Activated B cell treated with CpG ODN at 0.5 μM for 24 hours (primary cell): ENCODE measurements at regions of chr1 and their contacts with region 1.

Region 1: GRCh38 chr1:12166834-12167492 is at the start of gene TNFRSF1B:
- DNase-seq: peak; percentile 70
- ATAC-seq: peak; percentile 72
- H3K4me3 Mint-ChIP-seq: peak within 1 kb of the TSS; percentile 97
- H3K27ac Mint-ChIP-seq: peak within 1 kb of the TSS; percentile 92
- H3K4me1 Mint-ChIP-seq: peaks cover 71% of the 10 kb centered on the region
- H3K27me3 Mint-ChIP-seq: no peaks in the 10 kb centered on the region
- CTCF ChIP-seq: no peak
- total RNA-seq, gene TNFRSF1B: 89.0 and 98.6 TPM in 2 replicates

Region 2: GRCh38 chr1:11252538-11252937 is 914.4 kb before region 1 on chr1:
- CTCF ChIA-PET with region 1: no interaction called
- POLR2A ChIA-PET with region 1: no interaction called
- intact Hi-C with region 1: no loop called
- DNase-seq: no peak
- ATAC-seq: no peak
- H3K4me3 Mint-ChIP-seq: no peak overlapping the region
- H3K27ac Mint-ChIP-seq: no peak overlapping the region
- H3K4me1 Mint-ChIP-seq: no peaks in the 10 kb centered on the region
- H3K27me3 Mint-ChIP-seq: no peaks in the 10 kb centered on the region
- CTCF ChIP-seq: no peak

Region 3: DNA sequence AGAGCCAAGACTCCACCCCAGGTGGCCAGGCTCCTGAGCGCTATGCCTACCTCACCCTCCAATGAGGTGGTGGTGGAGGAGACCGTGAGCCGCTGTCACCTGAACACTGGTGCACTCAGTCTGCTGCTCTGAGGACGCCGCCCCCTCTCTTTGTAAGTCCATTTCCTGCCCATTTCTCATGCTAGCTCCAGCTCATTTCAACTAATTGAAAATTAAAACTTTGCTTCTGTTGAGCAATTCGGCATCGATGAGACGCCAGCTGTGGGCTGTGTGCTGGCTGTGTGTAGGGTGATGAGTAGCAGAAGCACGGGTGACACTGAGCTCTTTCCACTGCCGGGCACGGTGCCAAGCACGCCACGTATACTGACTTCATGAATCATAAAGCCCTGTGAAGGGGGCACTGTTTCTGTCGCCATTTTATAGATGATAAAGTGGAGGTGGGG is 11.1 kb after region 1 on chr1:
- CTCF ChIA-PET with region 1: interaction called, 3 read pairs
- POLR2A ChIA-PET with region 1: interaction called, 17 read pairs
- intact Hi-C with region 1: loop called (anchors 2 kb)
- DNase-seq: no peak
- ATAC-seq: no peak
- H3K4me3 Mint-ChIP-seq: peak overlapping the region; percentile 42
- H3K27ac Mint-ChIP-seq: peak overlapping the region; percentile 18
- H3K4me1 Mint-ChIP-seq: peaks cover 89% of the 10 kb centered on the region
- H3K27me3 Mint-ChIP-seq: no peaks in the 10 kb centered on the region
- CTCF ChIP-seq: no peak

Region 4: DNA sequence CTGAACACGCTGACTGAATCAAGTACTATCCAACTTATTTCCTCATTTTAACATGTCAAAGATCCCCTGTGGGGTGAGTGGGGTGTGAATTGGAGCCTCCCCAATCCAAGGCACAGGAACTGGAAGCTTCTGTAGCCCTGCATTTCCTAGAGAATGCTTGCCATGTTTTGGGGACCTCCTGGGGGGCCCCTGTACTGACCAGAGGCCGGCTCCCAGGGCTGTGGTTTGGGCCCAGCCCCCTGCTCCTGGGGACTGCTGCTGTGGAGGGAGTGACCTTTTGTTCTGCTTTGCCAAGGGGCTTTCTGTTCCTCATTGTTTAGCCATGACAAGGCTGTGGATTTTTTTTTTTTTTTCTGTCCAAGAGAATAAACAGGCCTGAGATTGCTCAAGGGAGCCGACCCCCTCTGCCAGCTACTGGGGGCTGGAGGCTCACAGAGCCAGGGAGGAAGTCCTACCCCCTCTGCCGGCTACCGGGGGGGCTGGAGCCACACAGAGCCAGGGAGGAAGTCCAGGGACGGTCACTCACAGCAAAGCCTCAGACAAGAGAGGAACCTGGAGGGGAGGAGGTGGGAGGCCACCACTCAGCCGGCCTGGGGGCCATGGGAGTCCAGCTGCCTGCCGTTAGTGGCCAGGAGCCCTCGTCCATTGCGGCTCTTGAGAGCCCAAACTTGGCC is 17.2 kb after region 1 on chr1:
- CTCF ChIA-PET with region 1: no interaction called
- POLR2A ChIA-PET with region 1: interaction called, 17 read pairs
- intact Hi-C with region 1: loop called (anchors 2 kb)
- DNase-seq: no peak
- ATAC-seq: peak; percentile 71
- H3K4me3 Mint-ChIP-seq: peak overlapping the region; percentile 48
- H3K27ac Mint-ChIP-seq: peak overlapping the region; percentile 70
- H3K4me1 Mint-ChIP-seq: peaks cover 73% of the 10 kb centered on the region
- H3K27me3 Mint-ChIP-seq: no peaks in the 10 kb centered on the region
- CTCF ChIP-seq: no peak